ENCODE measurements at regions of chr19 and their contacts with region 1.

Region 1: GRCh38 chr19:49073514-49074378 is 1.2 kb upstream of the KCNA7 start:
- DNase-seq: no peak
- H3K4me3 ChIP-seq: no peak overlapping the region
- H3K27ac ChIP-seq: no peak overlapping the region
- H3K4me1 ChIP-seq: no peaks in the 10 kb centered on the region
- H3K27me3 ChIP-seq: peaks cover 43% of the 10 kb centered on the region
- CTCF ChIP-seq: peak in 1 of 6 experiments; percentile 19
- POLR2A ChIP-seq: no peak

Region 2: GRCh38 chr19:49127674-49128544 is 54.2 kb after region 1 on chr19:
- intact Hi-C with region 1: no loop called
- DNase-seq: peak; percentile 98
- H3K4me3 ChIP-seq: peak overlapping the region in 1 of 4 donors; percentile 14
- H3K27ac ChIP-seq: peak overlapping the region in 3 of 5 donors; percentile 45 to 90 (median 69)
- H3K4me1 ChIP-seq: peaks cover 0 to 10% of the 10 kb centered on the region in 2 donors
- H3K27me3 ChIP-seq: no peaks in the 10 kb centered on the region
- CTCF ChIP-seq: peak in 2 of 6 experiments; percentile 39 to 50
- POLR2A ChIP-seq: no peak

Region 3: DNA sequence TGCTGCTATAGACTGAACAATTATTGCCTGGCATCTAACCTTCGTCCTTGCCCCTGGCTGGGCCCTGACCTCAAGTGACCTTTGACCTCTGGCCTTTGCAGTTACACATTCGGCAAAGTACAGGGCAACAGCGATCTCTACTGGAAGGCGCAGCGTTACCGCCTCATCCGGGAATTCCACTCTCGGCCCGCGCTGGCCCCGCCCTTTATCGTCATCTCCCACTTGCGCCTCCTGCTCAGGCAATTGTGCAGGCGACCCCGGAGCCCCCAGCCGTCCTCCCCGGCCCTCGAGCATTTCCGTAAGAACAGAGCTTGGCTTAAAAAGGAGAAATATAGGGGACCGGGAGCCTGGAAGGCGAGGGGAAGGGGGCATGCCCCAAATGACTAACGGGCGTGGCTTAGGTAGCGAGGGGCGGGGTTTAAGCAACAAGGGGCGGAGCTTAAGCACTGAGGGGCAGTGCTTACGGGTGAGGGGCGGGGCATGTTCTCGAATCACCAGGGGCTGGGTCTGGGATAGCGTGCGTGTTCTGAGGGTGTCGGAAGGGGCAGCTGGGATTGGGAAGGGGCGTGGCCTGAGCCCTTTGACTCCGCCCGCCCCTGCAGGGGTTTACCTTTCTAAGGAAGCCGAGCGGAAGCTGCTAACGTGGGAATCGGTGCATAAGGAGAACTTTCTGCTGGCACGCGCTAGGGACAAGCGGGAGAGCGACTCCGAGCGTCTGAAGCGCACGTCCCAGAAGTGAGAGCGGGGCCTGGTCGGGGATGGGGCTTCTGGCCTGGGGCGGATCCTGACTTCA is 136.6 kb after region 1 on chr19:
- intact Hi-C with region 1: loop called in 1 of 2 experiments (anchors 10 kb)
- DNase-seq: peak in 6 of 7 donors; percentile 55 to 75 (median 64)
- H3K4me3 ChIP-seq: no peak overlapping the region
- H3K27ac ChIP-seq: peak overlapping the region in 1 of 5 donors; percentile 18
- H3K4me1 ChIP-seq: peaks cover 0 to 8% of the 10 kb centered on the region in 2 donors
- H3K27me3 ChIP-seq: no peaks in the 10 kb centered on the region
- CTCF ChIP-seq: peak in 2 of 6 experiments; percentile 4 to 6
- POLR2A ChIP-seq: no peak

Region 4: DNA sequence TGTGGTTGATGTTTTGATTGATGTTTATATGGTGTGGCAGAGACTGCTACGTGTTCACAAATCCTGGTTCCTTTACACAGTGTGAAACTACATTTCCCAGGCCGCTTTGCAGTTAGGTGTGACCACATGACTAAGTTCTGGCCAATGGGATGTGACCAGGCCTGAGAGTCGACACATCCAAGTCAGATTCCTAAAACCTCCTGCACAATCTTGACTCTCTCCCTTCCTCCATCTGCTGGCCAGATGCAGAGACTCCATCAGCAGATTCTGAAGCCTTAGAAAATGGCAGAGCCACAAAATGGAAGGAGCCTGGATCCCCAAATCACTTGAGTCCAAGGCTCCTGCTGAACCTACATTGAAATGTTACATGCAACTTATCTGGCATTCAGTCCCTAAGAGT is 274.1 kb after region 1 on chr19:
- intact Hi-C with region 1: no loop called
- DNase-seq: peak in 1 of 7 donors; percentile 30
- H3K4me3 ChIP-seq: no peak overlapping the region
- H3K27ac ChIP-seq: no peak overlapping the region
- H3K4me1 ChIP-seq: no peaks in the 10 kb centered on the region
- H3K27me3 ChIP-seq: no peaks in the 10 kb centered on the region
- CTCF ChIP-seq: peak in 1 of 6 experiments; percentile 7
- POLR2A ChIP-seq: no peak

Measured in adrenal gland (tissue), 19 donors.